Vagina (tissue), 2 donors: ENCODE measurements at regions of chr2 and their contacts with region 1.

Region 1: GRCh38 chr2:189096769-189097447 is 82.7 kb downstream of the COL5A2 start:
- DNase-seq: no peak
- H3K4me3 ChIP-seq: no peak overlapping the region
- H3K27ac ChIP-seq: peak overlapping the region; percentile 22
- H3K4me1 ChIP-seq: no peaks in the 10 kb centered on the region
- H3K27me3 ChIP-seq: no peaks in the 10 kb centered on the region
- CTCF ChIP-seq: no peak
- POLR2A ChIP-seq: no peak

Region 2: GRCh38 chr2:189287982-189288521 is 191.1 kb after region 1 on chr2:
- intact Hi-C with region 1: loop called (anchors 10 kb)
- DNase-seq: no peak
- H3K4me3 ChIP-seq: no peak overlapping the region
- H3K27ac ChIP-seq: peak overlapping the region; percentile 38
- H3K4me1 ChIP-seq: no peaks in the 10 kb centered on the region
- H3K27me3 ChIP-seq: no peaks in the 10 kb centered on the region
- CTCF ChIP-seq: peak in 2 of 3 experiments; percentile 45 to 46
- POLR2A ChIP-seq: no peak